ENCODE measurements at regions of chr7 and their contacts with region 1.

Region 1: GRCh38 chr7:16918288-16918895 is 36.6 kb upstream of the AGR3 start:
- DNase-seq: no peak
- ATAC-seq: no peak
- H3K4me3 ChIP-seq: no peak overlapping the region
- H3K27ac ChIP-seq: no peak overlapping the region
- H3K4me1 ChIP-seq: no peaks in the 10 kb centered on the region
- H3K27me3 ChIP-seq: no peaks in the 10 kb centered on the region; a peak in 2 of 4 replicates
- CTCF ChIP-seq: peak; percentile 46 to 52 (median 48)
- EP300 ChIP-seq: no peak
- POLR2A ChIP-seq: no peak
- RAD21 ChIP-seq: peak; percentile 57; the same call in 1 of the 2 replicates

Region 2: GRCh38 chr7:16071246-16071857 is 847.0 kb before region 1 on chr7:
- CTCF ChIA-PET with region 1: no interaction called
- POLR2A ChIA-PET with region 1: no interaction called
- RAD21 ChIA-PET with region 1: no interaction called
- SMC1A ChIA-PET with region 1: no interaction called
- in situ Hi-C with region 1: no loop called
- intact Hi-C with region 1: loop called (anchors 2 kb)
- DNase-seq: no peak
- ATAC-seq: peak; percentile 85
- H3K4me3 ChIP-seq: no peak overlapping the region
- H3K27ac ChIP-seq: no peak overlapping the region
- H3K4me1 ChIP-seq: no peaks in the 10 kb centered on the region
- H3K27me3 ChIP-seq: no peaks in the 10 kb centered on the region
- CTCF ChIP-seq: peak; percentile 40 to 66 (median 65); a peak in 5 of 6 replicates
- EP300 ChIP-seq: no peak
- POLR2A ChIP-seq: no peak
- RAD21 ChIP-seq: peak; percentile 84

Region 3: DNA sequence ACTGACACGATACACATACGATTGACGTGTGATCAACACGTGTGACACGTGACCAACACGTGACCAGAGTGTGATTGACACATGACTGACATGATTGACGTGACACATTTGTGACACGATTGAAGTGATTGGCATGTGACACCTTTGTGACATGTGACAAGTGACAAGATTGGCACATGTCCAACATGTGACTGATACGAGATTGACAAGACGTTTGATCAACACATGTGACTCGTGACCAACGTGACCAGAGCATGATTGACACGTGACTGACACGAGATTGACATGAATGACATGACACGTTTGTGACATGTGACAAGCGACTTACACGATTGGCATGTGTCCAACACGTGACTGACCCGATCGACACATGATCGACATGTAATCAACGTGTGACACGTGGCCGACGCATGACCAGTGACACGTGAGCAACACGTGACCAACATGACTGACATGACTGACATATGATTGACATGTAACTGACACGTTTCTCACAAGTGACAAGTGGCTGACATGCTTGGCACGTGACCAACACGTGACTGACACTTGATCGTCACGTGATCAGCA is 519.0 kb before region 1 on chr7:
- CTCF ChIA-PET with region 1: no interaction called
- POLR2A ChIA-PET with region 1: no interaction called
- RAD21 ChIA-PET with region 1: no interaction called
- SMC1A ChIA-PET with region 1: no interaction called
- in situ Hi-C with region 1: no loop called
- intact Hi-C with region 1: no loop called
- DNase-seq: no peak
- ATAC-seq: no peak
- H3K4me3 ChIP-seq: no peak overlapping the region
- H3K27ac ChIP-seq: no peak overlapping the region
- H3K4me1 ChIP-seq: no peaks in the 10 kb centered on the region
- H3K27me3 ChIP-seq: no peaks in the 10 kb centered on the region
- CTCF ChIP-seq: no peak
- EP300 ChIP-seq: no peak
- POLR2A ChIP-seq: no peak
- RAD21 ChIP-seq: no peak

Region 4: DNA sequence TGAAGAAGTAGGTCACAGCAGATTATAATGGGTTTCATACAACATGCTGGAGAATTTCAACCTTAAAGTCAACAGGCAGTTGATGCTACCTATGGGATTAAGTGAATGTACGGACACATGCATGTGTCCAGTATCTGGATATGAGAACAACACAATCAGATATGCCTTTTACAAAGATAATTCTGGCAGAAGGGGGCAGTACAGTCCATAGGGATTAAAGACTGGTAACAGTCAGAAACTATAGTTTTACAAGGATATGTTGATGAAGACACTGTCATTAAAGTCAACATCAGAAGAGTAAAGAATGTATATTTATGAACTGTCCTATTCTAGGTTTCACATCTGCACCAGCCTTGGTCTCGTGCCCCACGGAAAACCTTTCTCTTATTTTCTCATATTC is 314.3 kb before region 1 on chr7:
- CTCF ChIA-PET with region 1: no interaction called
- POLR2A ChIA-PET with region 1: no interaction called
- RAD21 ChIA-PET with region 1: no interaction called
- SMC1A ChIA-PET with region 1: interaction called, 4 read pairs
- in situ Hi-C with region 1: no loop called
- intact Hi-C with region 1: loop called (anchors 5 kb)
- DNase-seq: no peak
- ATAC-seq: no peak
- H3K4me3 ChIP-seq: no peak overlapping the region
- H3K27ac ChIP-seq: no peak overlapping the region
- H3K4me1 ChIP-seq: no peaks in the 10 kb centered on the region
- H3K27me3 ChIP-seq: no peaks in the 10 kb centered on the region
- CTCF ChIP-seq: peak in 2 of 3 experiments; percentile 10; a peak in 1 of 6 replicates
- EP300 ChIP-seq: no peak
- POLR2A ChIP-seq: no peak
- RAD21 ChIP-seq: 0 out of 2 replicates have a peak, but pooled peaks have one; percentile 26

Region 5: GRCh38 chr7:16695621-16696237 is 222.7 kb before region 1 on chr7:
- CTCF ChIA-PET with region 1: interaction called, 4 read pairs
- POLR2A ChIA-PET with region 1: no interaction called
- RAD21 ChIA-PET with region 1: no interaction called
- SMC1A ChIA-PET with region 1: interaction called, 4 read pairs
- in situ Hi-C with region 1: no loop called
- intact Hi-C with region 1: loop called (anchors 5 kb)
- DNase-seq: no peak
- ATAC-seq: peak; percentile 60
- H3K4me3 ChIP-seq: no peak overlapping the region
- H3K27ac ChIP-seq: no peak overlapping the region
- H3K4me1 ChIP-seq: no peaks in the 10 kb centered on the region
- H3K27me3 ChIP-seq: no peaks in the 10 kb centered on the region
- CTCF ChIP-seq: peak; percentile 26 to 35 (median 29); a peak in 4 of 6 replicates
- EP300 ChIP-seq: no peak
- POLR2A ChIP-seq: no peak
- RAD21 ChIP-seq: peak; percentile 33; the same call in 1 of the 2 replicates

Region 6: DNA sequence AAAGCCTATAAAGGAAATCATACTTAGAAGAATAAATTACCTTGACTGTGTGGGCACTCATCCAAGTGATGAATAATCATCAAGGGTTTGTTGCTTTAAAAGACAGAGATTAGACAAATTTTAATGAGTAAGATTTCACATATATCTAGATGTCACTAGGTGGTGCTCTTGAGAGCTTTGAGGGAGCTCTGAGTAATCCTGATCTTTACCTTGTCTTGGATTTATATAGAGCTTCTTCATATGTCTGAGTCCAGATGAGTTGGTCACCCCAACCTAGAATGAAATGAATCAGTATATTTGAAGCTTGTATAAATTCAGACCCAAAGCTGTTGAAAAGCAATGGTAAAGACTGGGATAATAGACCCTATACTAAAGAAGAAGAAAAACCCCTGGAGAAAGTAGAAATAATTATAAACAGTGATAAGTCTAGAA is 117.3 kb before region 1 on chr7:
- CTCF ChIA-PET with region 1: interaction called, 33 read pairs
- POLR2A ChIA-PET with region 1: no interaction called
- RAD21 ChIA-PET with region 1: interaction called, 10 read pairs
- SMC1A ChIA-PET with region 1: interaction called, 13 read pairs
- in situ Hi-C with region 1: no loop called
- intact Hi-C with region 1: loop called (anchors 1 kb)
- DNase-seq: no peak
- ATAC-seq: peak; percentile 81
- H3K4me3 ChIP-seq: no peak overlapping the region
- H3K27ac ChIP-seq: no peak overlapping the region
- H3K4me1 ChIP-seq: no peaks in the 10 kb centered on the region
- H3K27me3 ChIP-seq: peaks cover 0 to 2% of the 10 kb centered on the region in 2 experiments; a peak in 1 of 4 replicates
- CTCF ChIP-seq: peak; percentile 38 to 41 (median 41); a peak in 5 of 6 replicates
- EP300 ChIP-seq: no peak
- POLR2A ChIP-seq: no peak
- RAD21 ChIP-seq: peak; percentile 26; the same call in 1 of the 2 replicates

Region 7: GRCh38 chr7:16891338-16891737 is 27.1 kb before region 1 on chr7:
- CTCF ChIA-PET with region 1: interaction called, 20 read pairs
- POLR2A ChIA-PET with region 1: no interaction called
- RAD21 ChIA-PET with region 1: interaction called, 9 read pairs
- SMC1A ChIA-PET with region 1: interaction called, 6 read pairs
- in situ Hi-C with region 1: no loop called
- intact Hi-C with region 1: loop called (anchors 1 kb)
- DNase-seq: peak; percentile 1
- ATAC-seq: peak; percentile 70
- H3K4me3 ChIP-seq: no peak overlapping the region
- H3K27ac ChIP-seq: no peak overlapping the region
- H3K4me1 ChIP-seq: no peaks in the 10 kb centered on the region
- H3K27me3 ChIP-seq: no peaks in the 10 kb centered on the region
- CTCF ChIP-seq: peak; percentile 14 to 48 (median 17); a peak in 4 of 6 replicates
- EP300 ChIP-seq: no peak
- POLR2A ChIP-seq: no peak
- RAD21 ChIP-seq: peak; percentile 63

Region 8: DNA sequence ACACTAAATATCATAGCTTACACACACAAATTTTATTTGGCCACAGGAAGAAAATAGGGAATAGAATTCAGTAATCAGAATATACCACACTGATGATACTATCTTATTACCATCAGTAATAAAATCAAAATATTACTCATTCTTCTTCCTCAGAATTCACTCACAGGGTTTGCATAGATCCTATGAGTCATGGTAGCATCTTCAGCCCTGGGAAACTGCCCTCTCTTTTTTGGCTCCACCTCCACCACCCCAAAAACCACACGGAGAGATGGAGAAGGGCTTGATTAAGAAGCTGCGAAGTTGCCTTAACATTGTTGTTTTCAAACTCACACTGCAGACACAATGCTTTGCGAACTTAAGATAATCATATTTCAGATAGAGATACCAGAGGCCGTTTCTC is 225.9 kb after region 1 on chr7:
- CTCF ChIA-PET with region 1: no interaction called
- POLR2A ChIA-PET with region 1: no interaction called
- RAD21 ChIA-PET with region 1: no interaction called
- SMC1A ChIA-PET with region 1: no interaction called
- in situ Hi-C with region 1: no loop called
- intact Hi-C with region 1: no loop called
- DNase-seq: no peak
- ATAC-seq: peak; percentile 46
- H3K4me3 ChIP-seq: no peak overlapping the region
- H3K27ac ChIP-seq: no peak overlapping the region
- H3K4me1 ChIP-seq: peaks cover 2% of the 10 kb centered on the region
- H3K27me3 ChIP-seq: no peaks in the 10 kb centered on the region
- CTCF ChIP-seq: no peak
- EP300 ChIP-seq: no peak
- POLR2A ChIP-seq: no peak
- RAD21 ChIP-seq: no peak